ENCODE measurements at regions of chr10 and their contacts with region 1.

Region 1: DNA sequence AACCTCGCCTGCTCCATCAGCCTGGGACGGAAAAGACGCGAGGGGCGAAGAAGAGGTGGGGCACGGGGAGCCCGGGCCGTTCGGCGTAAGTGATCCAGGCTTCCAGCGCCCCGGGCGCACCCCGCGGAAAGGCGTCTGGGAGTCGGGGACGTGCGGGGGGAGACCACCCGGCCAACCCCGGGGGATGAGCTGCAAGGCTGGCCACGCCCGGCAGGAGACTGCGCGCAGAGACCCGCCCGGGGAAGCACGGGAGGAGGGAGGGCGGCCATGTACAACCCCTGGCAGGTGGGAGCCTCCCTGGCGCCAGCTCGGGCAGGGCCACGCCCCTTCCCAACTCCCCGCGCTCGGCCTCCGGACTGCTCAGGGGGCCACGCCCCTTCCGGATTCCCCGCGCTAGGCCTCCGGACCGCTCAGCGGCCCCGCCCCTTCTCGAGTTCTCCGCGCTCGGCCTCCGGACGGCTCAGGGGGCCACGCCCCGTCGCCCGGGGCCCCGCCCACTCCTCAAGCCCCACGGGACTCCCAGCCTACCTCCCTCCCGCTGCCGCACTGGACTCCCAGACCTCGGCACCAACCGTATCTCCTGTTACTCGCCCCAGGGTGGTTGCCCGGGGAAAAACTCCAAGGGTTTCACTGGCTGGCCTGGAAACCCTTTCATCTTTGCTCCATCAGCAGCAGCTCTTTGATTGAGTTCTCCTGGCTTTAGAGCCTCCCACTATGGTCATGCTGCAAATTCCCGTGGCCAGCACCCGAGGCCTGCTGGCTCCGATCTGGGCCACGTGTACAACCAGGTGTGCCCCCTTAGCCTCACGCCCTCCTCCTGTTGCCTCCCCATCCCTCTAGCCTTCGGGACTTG is 284.4 kb downstream of the ZEB1 start:
- DNase-seq: peak; percentile 66
- ATAC-seq: peak; percentile 99
- H3K4me3 ChIP-seq: peak overlapping the region; percentile 66
- H3K27ac ChIP-seq: no peak overlapping the region
- H3K4me1 ChIP-seq: peaks cover 9% of the 10 kb centered on the region
- H3K27me3 ChIP-seq: no peaks in the 10 kb centered on the region
- CTCF ChIP-seq: no peak
- EP300 ChIP-seq: no peak
- POLR2A ChIP-seq: peak; percentile 71
- RAD21 ChIP-seq: no peak

Region 2: GRCh38 chr10:31759799-31760626 is 156.6 kb after region 1 on chr10:
- CTCF ChIA-PET with region 1: no interaction called
- POLR2A ChIA-PET with region 1: no interaction called
- RAD21 ChIA-PET with region 1: no interaction called
- SMC1A ChIA-PET with region 1: no interaction called
- in situ Hi-C with region 1: no loop called
- intact Hi-C with region 1: loop called (anchors 10 kb)
- DNase-seq: peak; percentile 77
- ATAC-seq: peak; percentile 97
- H3K4me3 ChIP-seq: peak overlapping the region; percentile 90
- H3K27ac ChIP-seq: peak overlapping the region; percentile 79
- H3K4me1 ChIP-seq: peaks cover 3% of the 10 kb centered on the region; the same call in 1 of the 2 replicates
- H3K27me3 ChIP-seq: no peaks in the 10 kb centered on the region
- CTCF ChIP-seq: no peak
- EP300 ChIP-seq: no peak
- POLR2A ChIP-seq: peak; percentile 84
- RAD21 ChIP-seq: no peak

Measured in GM12878 (cell line).